H1 (cell line): ENCODE measurements at regions of chr2 and their contacts with region 1.

Region 1: GRCh38 chr2:232365621-232366321 is 12.8 kb upstream of the ALPP start:
- DNase-seq: no peak
- H3K4me3 ChIP-seq: no peak overlapping the region
- H3K27ac ChIP-seq: no peak overlapping the region
- H3K4me1 ChIP-seq: peaks cover 0 to 24% (median 6%) of the 10 kb centered on the region in 4 experiments; a peak in 6 of 7 replicates
- H3K27me3 ChIP-seq: no peaks in the 10 kb centered on the region
- CTCF ChIP-seq: peak; percentile 72 to 81 (median 73)
- EP300 ChIP-seq: no peak
- POLR2A ChIP-seq: no peak
- RAD21 ChIP-seq: peak; percentile 51 to 66

Region 2: DNA sequence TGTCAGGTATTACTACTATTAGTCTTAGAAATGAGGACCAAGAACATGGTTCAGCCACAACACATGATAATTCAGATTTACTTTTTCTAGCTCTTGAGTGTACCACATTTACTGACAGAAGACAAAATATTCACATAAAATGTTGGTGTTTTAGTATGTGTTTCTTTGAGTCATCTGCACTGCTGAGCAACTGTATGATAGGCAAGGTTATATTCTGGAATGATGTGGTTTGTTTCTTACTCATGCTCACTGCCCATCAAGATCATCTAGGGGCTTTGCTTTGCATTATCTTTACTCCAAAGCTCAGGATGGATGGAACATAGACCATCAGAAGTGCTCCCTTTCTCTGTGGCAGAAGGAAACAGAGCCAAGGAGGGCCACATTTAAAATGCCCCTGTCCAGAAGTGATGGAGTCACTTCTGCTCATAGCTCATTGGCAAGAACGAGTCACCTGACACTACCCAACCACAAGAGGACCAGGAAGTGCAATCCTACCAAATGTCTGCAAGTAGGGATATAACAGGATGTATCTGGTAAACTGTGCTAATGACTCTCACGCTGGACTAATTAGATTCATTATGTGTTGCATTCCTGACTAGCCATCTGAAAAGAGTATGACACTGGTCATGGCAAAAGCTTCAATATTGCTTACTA is 322.7 kb before region 1 on chr2:
- CTCF ChIA-PET with region 1: no interaction called
- POLR2A ChIA-PET with region 1: no interaction called
- DNase-seq: no peak
- H3K4me3 ChIP-seq: no peak overlapping the region
- H3K27ac ChIP-seq: no peak overlapping the region
- H3K4me1 ChIP-seq: peaks cover 0 to 4% (median 0%) of the 10 kb centered on the region in 4 experiments; a peak in 2 of 7 replicates
- H3K27me3 ChIP-seq: no peaks in the 10 kb centered on the region
- CTCF ChIP-seq: no peak
- EP300 ChIP-seq: no peak
- POLR2A ChIP-seq: no peak
- RAD21 ChIP-seq: no peak

Region 3: GRCh38 chr2:232053777-232054176 is 312.0 kb before region 1 on chr2:
- CTCF ChIA-PET with region 1: no interaction called
- POLR2A ChIA-PET with region 1: no interaction called
- DNase-seq: peak in 1 of 2 experiments; percentile 10
- H3K4me3 ChIP-seq: peak overlapping the region in 1 of 4 experiments; percentile 7; a peak in 1 of 8 replicates
- H3K27ac ChIP-seq: no peak overlapping the region
- H3K4me1 ChIP-seq: peaks cover 0 to 6% (median 1%) of the 10 kb centered on the region in 4 experiments; a peak in 4 of 7 replicates
- H3K27me3 ChIP-seq: no peaks in the 10 kb centered on the region
- CTCF ChIP-seq: no peak
- EP300 ChIP-seq: no peak
- POLR2A ChIP-seq: no peak
- RAD21 ChIP-seq: no peak

Region 4: GRCh38 chr2:232327105-232328041 is 38.4 kb before region 1 on chr2:
- CTCF ChIA-PET with region 1: interaction called, 43 read pairs
- POLR2A ChIA-PET with region 1: no interaction called
- DNase-seq: peak; percentile 77 to 99
- H3K4me3 ChIP-seq: no peak overlapping the region
- H3K27ac ChIP-seq: no peak overlapping the region
- H3K4me1 ChIP-seq: peaks cover 0 to 18% (median 10%) of the 10 kb centered on the region in 4 experiments; a peak in 6 of 7 replicates
- H3K27me3 ChIP-seq: no peaks in the 10 kb centered on the region
- CTCF ChIP-seq: peak in 2 of 3 experiments; percentile 88 to 90; a peak in 3 of 4 replicates
- EP300 ChIP-seq: no peak
- POLR2A ChIP-seq: no peak
- RAD21 ChIP-seq: peak; percentile 78 to 82

Region 5: GRCh38 chr2:232339121-232340081 is 26.4 kb before region 1 on chr2:
- CTCF ChIA-PET with region 1: interaction called, 92 read pairs
- POLR2A ChIA-PET with region 1: interaction called, 3 read pairs
- DNase-seq: peak in 1 of 2 experiments; percentile 89
- H3K4me3 ChIP-seq: no peak overlapping the region
- H3K27ac ChIP-seq: no peak overlapping the region
- H3K4me1 ChIP-seq: no peaks in the 10 kb centered on the region; a peak in 1 of 7 replicates
- H3K27me3 ChIP-seq: no peaks in the 10 kb centered on the region
- CTCF ChIP-seq: peak in 2 of 3 experiments; percentile 82 to 87; a peak in 3 of 4 replicates
- EP300 ChIP-seq: no peak
- POLR2A ChIP-seq: no peak
- RAD21 ChIP-seq: peak; percentile 54 to 62

Region 6: GRCh38 chr2:232385660-232386489 is 20.1 kb after region 1 on chr2:
- CTCF ChIA-PET with region 1: interaction called, 15 read pairs
- POLR2A ChIA-PET with region 1: interaction called, 4 read pairs
- DNase-seq: no peak
- H3K4me3 ChIP-seq: peak overlapping the region; percentile 55 to 65 (median 63)
- H3K27ac ChIP-seq: no peak overlapping the region
- H3K4me1 ChIP-seq: peaks cover 5 to 32% (median 15%) of the 10 kb centered on the region in 4 experiments
- H3K27me3 ChIP-seq: peaks cover 22 to 66% (median 66%) of the 10 kb centered on the region in 4 experiments
- CTCF ChIP-seq: no peak
- EP300 ChIP-seq: no peak
- POLR2A ChIP-seq: no peak
- RAD21 ChIP-seq: 0 out of 4 replicates have a peak, but pooled peaks of 1 of the 2 experiments have one; percentile 2

Region 7: DNA sequence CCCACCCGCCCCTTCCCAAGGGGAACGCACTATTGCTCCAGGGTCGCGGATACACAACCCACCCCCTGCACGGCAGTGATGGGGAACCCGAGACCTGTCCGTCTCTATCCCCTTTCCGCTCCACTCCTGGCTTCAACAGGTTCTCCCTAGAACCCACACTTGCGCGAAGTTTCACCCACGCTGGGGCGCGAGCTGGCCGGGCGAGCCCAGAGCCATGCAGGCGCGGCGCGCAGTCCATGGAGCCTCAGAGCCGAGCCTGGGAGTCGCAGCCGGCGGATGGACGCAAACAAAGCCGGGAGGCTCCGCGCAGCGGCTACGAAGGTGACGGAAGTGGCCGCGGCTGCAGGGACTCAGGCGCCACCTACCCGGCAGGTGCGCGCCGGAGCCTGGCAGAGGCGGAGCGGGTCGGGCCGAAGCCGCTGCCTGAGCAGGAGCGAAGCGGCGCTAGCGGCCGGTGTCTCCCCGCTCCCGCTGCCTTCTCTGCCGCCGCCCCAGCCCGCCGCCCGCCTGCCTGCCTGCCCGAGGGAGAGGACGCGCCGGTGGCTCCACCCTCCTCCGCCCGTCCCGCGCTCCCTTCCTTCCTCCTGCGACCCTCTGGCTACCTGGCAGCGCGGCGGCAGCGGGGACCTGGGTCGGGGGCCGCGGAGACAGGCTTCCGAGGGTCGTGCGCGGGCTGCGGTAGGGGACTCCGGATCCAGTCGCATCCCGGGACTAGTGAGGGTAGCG is 54.9 kb after region 1 on chr2:
- CTCF ChIA-PET with region 1: interaction called, 80 read pairs
- POLR2A ChIA-PET with region 1: no interaction called
- DNase-seq: peak in 1 of 2 experiments; percentile 76
- H3K4me3 ChIP-seq: peak overlapping the region; percentile 69 to 95 (median 76)
- H3K27ac ChIP-seq: peak overlapping the region; percentile 27
- H3K4me1 ChIP-seq: peaks cover 8 to 43% (median 31%) of the 10 kb centered on the region in 4 experiments
- H3K27me3 ChIP-seq: peaks cover 12 to 40% (median 36%) of the 10 kb centered on the region in 4 experiments
- CTCF ChIP-seq: no peak
- EP300 ChIP-seq: no peak
- POLR2A ChIP-seq: no peak
- RAD21 ChIP-seq: no peak

Region 8: GRCh38 chr2:232438951-232439757 is 73.4 kb after region 1 on chr2:
- CTCF ChIA-PET with region 1: interaction called, 82 read pairs
- POLR2A ChIA-PET with region 1: interaction called, 5 read pairs
- DNase-seq: peak in 1 of 2 experiments; percentile 71
- H3K4me3 ChIP-seq: no peak overlapping the region
- H3K27ac ChIP-seq: no peak overlapping the region
- H3K4me1 ChIP-seq: peaks cover 0 to 6% (median 4%) of the 10 kb centered on the region in 4 experiments; a peak in 6 of 7 replicates
- H3K27me3 ChIP-seq: peaks cover 0 to 2% (median 0%) of the 10 kb centered on the region in 4 experiments; a peak in 3 of 7 replicates
- CTCF ChIP-seq: peak in 2 of 3 experiments; percentile 22 to 28; a peak in 2 of 4 replicates
- EP300 ChIP-seq: no peak
- POLR2A ChIP-seq: no peak
- RAD21 ChIP-seq: peak; percentile 36 to 45

Region 9: DNA sequence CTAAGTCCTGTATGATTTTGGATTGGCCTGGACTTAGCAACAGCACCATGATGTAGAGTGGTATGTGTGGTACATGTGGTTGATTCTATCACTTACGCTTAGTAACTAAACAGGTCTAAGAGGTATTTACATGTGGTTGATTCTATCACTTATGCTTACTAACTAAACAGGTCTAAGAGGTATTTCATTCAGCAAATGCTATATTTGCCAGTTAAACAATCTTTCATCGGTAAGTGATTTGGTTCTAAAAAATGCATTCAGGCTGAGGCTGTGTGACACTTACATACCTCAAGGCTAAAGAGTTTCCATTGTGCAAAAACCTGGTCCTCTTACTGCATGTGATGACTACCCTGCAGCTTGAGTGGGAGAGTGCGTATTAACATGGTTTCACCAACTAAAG is 197.8 kb after region 1 on chr2:
- CTCF ChIA-PET with region 1: no interaction called
- POLR2A ChIA-PET with region 1: no interaction called
- DNase-seq: no peak
- H3K4me3 ChIP-seq: no peak overlapping the region
- H3K27ac ChIP-seq: no peak overlapping the region
- H3K4me1 ChIP-seq: no peaks in the 10 kb centered on the region
- H3K27me3 ChIP-seq: no peaks in the 10 kb centered on the region
- CTCF ChIP-seq: no peak
- EP300 ChIP-seq: no peak
- POLR2A ChIP-seq: no peak
- RAD21 ChIP-seq: no peak